ENCODE measurements at regions of chr12 and their contacts with region 1.

Region 1: DNA sequence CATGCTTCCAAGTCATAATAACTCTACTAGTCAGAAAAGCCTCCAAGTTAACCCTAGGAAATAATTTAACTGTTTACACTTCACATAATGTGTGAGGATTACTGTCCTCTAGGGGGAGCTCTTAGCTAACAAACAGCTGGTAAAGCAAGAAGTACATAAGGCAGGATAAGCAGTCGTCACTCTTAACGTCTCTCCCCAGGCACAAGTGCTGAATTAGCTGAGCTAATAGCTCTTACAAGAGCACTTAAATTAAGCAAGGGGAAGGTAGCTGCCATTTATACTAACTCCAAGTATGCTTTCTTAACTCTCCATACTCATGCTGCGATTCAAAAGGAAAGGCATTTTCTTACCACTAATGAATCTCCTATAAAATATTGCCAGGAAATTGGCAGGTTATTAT is 79.3 kb upstream of the TSPAN11 start:
- DNase-seq: peak in 1 of 3 donors; percentile 59
- ATAC-seq: peak; percentile 24
- H3K4me3 ChIP-seq: no peak overlapping the region
- H3K4me1 ChIP-seq: no peaks in the 10 kb centered on the region
- CTCF ChIP-seq: peak; percentile 39

Region 2: DNA sequence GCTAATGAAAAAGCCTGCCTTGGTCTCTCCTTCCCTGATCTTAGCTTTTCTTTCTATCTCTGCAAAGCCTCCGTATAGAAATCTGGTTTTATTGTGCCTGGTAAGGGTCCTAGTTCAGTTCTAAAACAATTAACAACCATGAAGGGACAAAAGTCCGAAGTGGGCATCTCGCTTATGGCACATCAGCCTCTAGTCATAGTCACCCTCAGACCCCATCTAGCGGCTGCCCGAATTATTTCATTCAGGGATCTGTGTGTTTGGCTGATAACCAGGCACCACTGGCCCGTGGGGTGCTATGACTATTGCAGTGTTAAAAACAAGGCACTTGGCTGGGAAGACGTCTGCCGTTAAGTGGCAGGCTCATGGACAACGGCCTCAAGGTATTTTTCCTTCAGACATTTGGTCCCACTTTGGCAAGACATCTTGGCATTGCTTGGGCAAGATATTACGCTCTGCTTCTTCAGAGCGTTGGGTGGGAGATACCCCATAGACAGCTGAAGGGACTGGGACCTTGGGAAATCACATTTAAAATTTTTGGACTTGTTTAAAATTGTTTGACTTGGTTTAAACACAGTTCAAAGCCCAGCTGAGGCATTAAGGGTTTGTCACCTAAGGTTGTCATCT is 391.6 kb after region 1 on chr12:
- intact Hi-C with region 1: loop called (anchors 10 kb)
- DNase-seq: peak in 2 of 3 donors; percentile 53 to 86
- ATAC-seq: peak; percentile 58
- H3K4me3 ChIP-seq: no peak overlapping the region
- H3K4me1 ChIP-seq: no peaks in the 10 kb centered on the region
- CTCF ChIP-seq: peak; percentile 44

Region 3: DNA sequence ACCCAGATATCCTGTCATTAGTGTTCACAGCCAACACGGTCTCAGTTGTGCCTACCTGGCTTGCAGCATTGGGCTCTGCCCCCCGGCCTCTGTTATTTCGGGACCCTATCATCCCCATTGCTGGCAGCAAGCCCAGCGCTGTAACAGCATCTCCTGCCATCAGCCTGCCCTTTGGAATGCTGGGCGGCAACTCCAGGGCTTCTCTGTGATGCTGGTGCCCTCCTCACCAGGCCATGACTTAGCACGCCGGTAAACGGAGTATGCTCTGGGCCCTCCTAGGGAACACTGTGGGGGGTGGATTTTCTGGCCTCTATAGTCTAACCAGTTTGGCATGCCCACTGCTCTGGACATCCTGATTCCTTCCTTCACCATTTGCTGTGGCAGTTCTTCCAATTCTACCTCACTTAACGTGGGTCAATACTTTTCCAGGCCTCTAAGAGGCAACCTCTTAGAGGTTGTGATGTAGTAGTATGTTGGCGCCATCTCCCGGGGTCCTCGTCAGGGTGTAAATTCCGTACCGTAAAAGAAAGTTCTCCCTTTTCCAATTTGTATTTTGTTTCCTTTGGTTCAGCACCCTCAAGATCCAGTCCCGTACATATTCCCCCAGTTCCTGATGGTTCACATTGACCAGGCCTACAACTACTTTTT is 398.7 kb after region 1 on chr12:
- intact Hi-C with region 1: loop called in 1 of 2 experiments (anchors 10 kb)
- DNase-seq: no peak
- ATAC-seq: no peak
- H3K4me3 ChIP-seq: no peak overlapping the region
- H3K4me1 ChIP-seq: no peaks in the 10 kb centered on the region
- CTCF ChIP-seq: no peak